ENCODE measurements at regions of chr6 and their contacts with region 1.

Region 1: DNA sequence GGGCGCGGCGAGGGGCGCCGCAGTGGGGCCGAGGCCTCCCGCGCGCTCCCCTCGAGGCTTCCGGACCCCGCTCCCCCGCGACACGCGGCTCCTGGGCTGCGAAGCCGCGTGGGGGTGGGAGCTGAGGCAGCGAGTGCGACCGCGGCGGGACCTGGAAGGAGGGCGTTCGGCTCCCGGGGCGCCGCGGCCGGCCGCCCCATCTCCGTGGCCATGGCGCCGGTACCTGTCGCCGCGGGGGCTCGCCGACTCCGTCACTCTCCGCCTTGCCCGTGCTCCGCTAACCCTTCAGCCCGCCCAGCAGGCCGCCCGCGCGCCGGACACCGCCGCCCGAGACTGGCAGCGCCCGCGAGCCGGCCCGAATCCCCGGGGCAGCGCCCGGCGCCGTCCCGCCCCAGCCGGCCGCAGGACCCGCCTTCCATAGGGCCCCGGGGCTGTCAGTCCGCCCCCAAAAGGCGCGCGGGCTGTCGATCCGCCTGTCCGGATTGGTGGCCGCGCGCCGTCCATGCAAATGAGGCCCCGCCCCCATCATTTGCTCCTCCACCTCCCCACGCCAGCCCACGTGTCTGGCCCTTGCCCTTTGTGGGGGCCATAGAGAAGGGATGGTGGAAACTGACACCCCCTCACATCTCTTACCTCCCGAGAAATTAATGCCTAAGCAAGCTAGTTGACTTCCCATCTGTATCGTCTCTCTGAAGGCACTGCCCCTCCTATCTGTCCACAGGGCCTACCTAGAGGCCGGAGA is at the start of gene FKBP5:
- DNase-seq: peak; percentile 99
- total RNA-seq, gene FKBP5: 83.1 to 193 TPM

Region 2: DNA sequence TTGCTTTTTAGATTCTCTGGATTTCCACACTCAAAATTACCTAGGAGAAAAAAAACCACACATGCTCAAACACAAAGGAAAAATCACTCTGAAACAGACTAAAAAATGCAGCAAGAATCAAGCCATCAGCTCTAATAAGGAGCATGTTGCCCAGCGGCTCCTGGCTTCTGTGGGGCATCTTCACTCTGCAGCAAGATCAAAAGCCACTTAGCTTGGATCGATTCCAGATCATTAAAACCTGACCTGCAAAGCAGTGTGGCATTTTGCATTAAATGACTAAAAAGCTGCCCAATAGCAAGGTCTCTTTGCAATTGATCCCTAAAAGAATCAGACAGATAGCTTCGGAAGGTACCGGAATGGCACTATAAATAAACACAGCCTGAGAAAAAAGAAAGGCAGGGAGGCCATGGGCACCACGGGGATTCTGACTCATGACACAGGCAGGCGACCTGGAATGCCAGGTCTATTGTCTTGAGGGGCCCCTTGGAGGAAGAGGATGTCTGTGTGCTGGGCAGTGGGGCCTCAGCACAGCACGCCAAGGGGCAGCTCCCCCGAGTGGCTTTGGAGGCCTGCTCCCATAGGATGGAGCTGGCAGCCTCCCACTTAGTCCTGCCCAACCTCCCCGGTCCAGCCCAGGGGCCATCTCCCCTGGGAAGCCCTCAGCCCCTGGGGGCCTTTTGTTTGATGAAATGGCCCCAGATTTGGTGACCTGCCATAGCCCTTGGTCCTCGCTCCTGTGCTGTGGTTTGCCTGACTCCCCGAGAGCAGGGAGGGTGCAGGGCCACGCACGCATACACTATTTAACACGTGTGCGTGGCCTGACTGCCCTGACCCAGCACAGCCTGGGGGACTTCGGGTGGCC is 1907.4 kb before region 1 on chr6:
- intact Hi-C with region 1: loop called in 1 of 2 experiments (anchors 5 kb)
- DNase-seq: no peak

Region 3: GRCh38 chr6:35624341-35625070 is 64.2 kb before region 1 on chr6:
- intact Hi-C with region 1: loop called in 1 of 2 experiments (anchors 10 kb)
- DNase-seq: no peak

Region 4: GRCh38 chr6:35663447-35664235 is 25.1 kb before region 1 on chr6:
- intact Hi-C with region 1: no loop called
- DNase-seq: no peak

Region 5: GRCh38 chr6:35731736-35732532 is 43.2 kb after region 1 on chr6:
- intact Hi-C with region 1: loop called (anchors 2 to 5 kb)
- DNase-seq: peak; percentile 99

Region 6: DNA sequence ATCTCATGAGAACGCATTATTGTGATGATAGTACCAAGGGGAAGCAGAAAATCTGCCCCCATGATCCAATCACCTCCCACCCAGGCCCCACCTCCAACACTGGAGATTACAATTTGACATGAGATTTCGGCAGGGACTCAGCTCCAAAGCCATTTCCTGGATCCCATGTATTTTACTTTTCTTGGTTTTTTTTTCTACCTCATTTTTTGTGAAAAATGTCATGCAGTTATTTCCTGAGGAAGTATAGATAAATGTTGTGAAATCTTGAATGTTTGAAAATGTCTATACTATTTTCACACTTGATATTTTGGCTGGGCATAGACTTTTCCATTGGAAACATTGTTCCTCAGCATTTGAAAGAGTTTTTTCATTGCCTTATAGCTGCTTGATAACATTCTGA is 498.7 kb after region 1 on chr6:
- intact Hi-C with region 1: no loop called
- DNase-seq: no peak

Measured in posterior vena cava (tissue), 2 donors.